ENCODE measurements at regions of chr19 and their contacts with region 1.

Region 1: GRCh38 chr19:34145741-34146202 is 26.5 kb upstream of the LSM14A start:
- H3K4me3 Mint-ChIP-seq: no peak overlapping the region
- H3K27ac Mint-ChIP-seq: no peak overlapping the region
- H3K4me1 Mint-ChIP-seq: no peaks in the 10 kb centered on the region
- H3K27me3 Mint-ChIP-seq: peaks cover 1% of the 10 kb centered on the region

Region 2: GRCh38 chr19:34041925-34042521 is 103.7 kb before region 1 on chr19:
- intact Hi-C with region 1: loop called (anchors 1 kb)
- H3K4me3 Mint-ChIP-seq: no peak overlapping the region
- H3K27ac Mint-ChIP-seq: no peak overlapping the region
- H3K4me1 Mint-ChIP-seq: no peaks in the 10 kb centered on the region
- H3K27me3 Mint-ChIP-seq: peaks cover 4% of the 10 kb centered on the region

Region 3: DNA sequence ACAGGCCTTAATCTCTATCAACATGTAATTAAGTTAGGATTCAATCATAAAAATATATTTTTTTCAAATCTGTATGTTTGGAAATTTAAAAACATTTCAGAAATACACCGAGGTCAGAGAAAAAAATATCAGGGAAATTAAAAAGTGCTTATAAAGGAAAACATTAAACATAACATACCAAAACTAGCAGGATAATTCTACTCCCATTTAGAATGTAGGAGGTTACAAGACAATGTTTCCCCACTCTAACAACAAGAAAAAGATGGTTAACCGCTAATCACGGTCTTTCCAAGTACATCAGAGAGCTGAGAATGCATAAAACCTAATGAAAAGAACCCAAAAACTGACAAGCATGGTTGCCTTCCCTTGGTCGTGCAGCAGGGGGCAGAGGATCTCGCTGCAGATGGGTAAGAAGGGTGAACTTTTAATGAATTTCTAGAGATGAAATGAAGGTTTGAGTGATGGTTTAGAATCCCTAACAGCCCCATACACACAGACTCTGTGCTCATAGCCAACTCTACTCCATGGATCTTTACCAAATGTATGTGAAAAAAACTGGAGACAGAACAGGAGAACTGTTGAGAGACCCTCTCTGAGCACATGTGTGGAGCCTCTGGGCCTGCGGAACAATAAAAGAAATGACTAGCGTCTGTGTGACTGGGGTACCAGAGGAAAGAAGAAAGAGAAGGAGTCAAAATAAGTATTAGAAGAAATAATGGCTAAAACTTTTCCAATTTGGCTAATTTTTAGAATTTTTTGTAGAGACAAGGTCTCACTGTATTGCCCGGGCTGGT is 24.7 kb before region 1 on chr19:
- intact Hi-C with region 1: loop called (anchors 1 kb)
- H3K4me3 Mint-ChIP-seq: no peak overlapping the region
- H3K27ac Mint-ChIP-seq: no peak overlapping the region
- H3K4me1 Mint-ChIP-seq: no peaks in the 10 kb centered on the region
- H3K27me3 Mint-ChIP-seq: peaks cover 11% of the 10 kb centered on the region

Region 4: DNA sequence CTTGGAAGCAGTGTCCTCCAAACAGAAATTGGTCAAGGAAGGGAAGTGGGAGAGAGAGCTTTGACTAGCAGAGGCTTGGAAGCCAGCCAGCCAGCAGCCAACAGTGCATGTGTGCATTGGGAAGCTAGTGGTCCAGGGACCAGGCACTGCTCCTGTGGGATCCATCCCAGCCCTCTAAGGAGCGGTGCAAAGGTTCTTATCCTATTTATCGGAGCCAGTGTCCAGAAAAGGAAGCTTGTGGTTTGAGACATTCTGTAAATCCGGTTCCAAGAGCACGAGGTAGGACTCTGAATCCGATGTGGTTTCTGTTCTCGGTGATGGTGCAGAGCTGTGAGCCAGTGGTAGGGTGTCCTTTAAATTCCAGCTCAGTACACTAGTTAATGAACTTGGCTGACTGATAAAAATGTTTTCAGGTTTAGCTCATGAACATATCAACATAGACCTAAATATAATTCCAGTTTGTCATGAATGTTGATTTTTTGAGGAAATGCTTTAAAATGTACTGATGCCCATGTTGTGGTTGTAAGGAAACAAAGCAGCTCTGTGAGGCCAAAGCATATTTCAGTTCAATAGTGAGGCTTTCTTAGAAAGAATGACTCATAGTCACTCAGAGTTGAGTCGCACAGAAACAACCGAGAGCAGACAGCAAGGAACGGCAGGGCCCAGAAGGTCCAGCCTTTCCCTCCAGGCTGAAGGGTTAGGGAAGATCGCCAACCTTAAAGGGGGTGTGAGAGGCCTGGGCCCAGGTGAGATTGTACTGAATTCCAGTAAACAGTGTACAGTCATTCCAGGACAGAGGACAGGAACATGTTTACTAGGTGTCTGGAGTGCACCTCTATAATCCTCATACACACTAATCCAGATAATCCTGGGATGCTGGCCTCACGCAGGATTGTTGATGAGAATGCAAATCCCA is 87.1 kb after region 1 on chr19:
- intact Hi-C with region 1: no loop called
- H3K4me3 Mint-ChIP-seq: peak overlapping the region; percentile 51
- H3K27ac Mint-ChIP-seq: peak overlapping the region; percentile 78
- H3K4me1 Mint-ChIP-seq: peaks cover 27% of the 10 kb centered on the region
- H3K27me3 Mint-ChIP-seq: no peaks in the 10 kb centered on the region